MCF 10A (cell line): ENCODE measurements at regions of chr13 and their contacts with region 1.

Region 1: GRCh38 chr13:24693862-24694471 is 13.8 kb downstream of the ATP12A start:
- DNase-seq: peak; percentile 82
- H3K4me3 Mint-ChIP-seq: no peak overlapping the region
- H3K27ac Mint-ChIP-seq: no peak overlapping the region
- H3K4me1 Mint-ChIP-seq: peaks cover 5% of the 10 kb centered on the region
- H3K27me3 Mint-ChIP-seq: peaks cover 9% of the 10 kb centered on the region
- CTCF ChIP-seq: peak; percentile 66

Region 2: DNA sequence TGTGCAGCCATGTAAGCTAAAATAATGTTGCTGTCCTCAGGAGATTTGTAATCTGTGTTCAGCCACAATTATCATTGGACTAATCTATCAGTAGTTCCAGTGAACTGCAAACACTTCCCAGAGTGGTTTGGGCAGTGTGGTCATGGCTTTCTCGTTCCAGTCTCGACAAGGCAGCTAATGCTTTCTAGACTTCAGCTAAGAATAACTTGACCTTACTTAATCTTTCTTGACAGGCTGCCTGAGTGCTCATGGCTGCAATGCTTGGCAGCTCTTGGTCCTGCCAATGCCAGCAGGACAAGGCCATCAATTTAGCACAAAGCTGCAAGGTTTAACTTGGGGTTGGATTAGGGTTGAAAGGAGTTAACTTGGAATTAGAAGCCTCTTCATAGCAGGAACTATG is 19.1 kb after region 1 on chr13:
- CTCF ChIA-PET with region 1: interaction called, 18 read pairs
- POLR2A ChIA-PET with region 1: no interaction called
- intact Hi-C with region 1: no loop called
- DNase-seq: no peak
- H3K4me3 Mint-ChIP-seq: no peak overlapping the region
- H3K27ac Mint-ChIP-seq: no peak overlapping the region
- H3K4me1 Mint-ChIP-seq: no peaks in the 10 kb centered on the region
- H3K27me3 Mint-ChIP-seq: no peaks in the 10 kb centered on the region
- CTCF ChIP-seq: no peak

Region 3: DNA sequence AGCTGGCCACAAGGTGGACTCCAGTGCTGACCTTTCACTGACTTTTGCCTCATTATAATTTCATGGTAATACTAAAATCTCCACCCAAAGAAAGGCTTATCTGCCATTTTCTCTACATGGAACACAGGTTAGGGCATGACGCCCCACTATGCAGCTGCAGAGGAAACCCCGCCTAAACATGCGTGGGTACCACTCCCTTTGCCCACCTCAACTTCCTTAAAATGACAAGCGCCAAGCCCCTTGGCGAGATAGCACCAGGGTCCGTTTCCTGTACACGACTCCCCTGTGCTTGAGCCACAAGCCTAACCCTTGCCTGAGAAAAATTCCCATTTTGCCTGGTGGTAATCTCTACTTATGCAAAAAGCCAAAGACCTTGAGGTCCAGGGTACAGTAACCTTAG is 366.0 kb after region 1 on chr13:
- CTCF ChIA-PET with region 1: no interaction called
- POLR2A ChIA-PET with region 1: no interaction called
- intact Hi-C with region 1: loop called (anchors 10 kb)
- DNase-seq: no peak
- H3K4me3 Mint-ChIP-seq: no peak overlapping the region
- H3K27ac Mint-ChIP-seq: no peak overlapping the region
- H3K4me1 Mint-ChIP-seq: no peaks in the 10 kb centered on the region
- H3K27me3 Mint-ChIP-seq: peaks cover 9% of the 10 kb centered on the region
- CTCF ChIP-seq: no peak